Activated T-helper 2 cell treated with anti-CD3 and anti-CD28 coated beads, Interferon-gamma antibody, Interleukin-2, Interleukin-4, amounts not matched to agents 10 μg/mL and 5 μg/mL and 100 μg/mL, durations not matched to agents 14 hours and 24 hours and 36 hours (primary cell): ENCODE measurements at regions of chr3 and their contacts with region 1.

Region 1: GRCh38 chr3:100400780-100401673 is at the starts of genes LNP1 and TOMM70:
- DNase-seq: peak; percentile 92
- H3K4me3 Mint-ChIP-seq: peak within 1 kb of the TSS; percentile 90
- H3K27ac Mint-ChIP-seq: peak within 1 kb of the TSS; percentile 98
- H3K4me1 Mint-ChIP-seq: peaks cover 41% of the 10 kb centered on the region
- H3K27me3 Mint-ChIP-seq: no peaks in the 10 kb centered on the region
- total RNA-seq, gene LNP1: 2.0 and 2.8 TPM in 2 replicates
- total RNA-seq, gene TOMM70: 52.8 and 54.4 TPM in 2 replicates

Region 2: GRCh38 chr3:98556164-98557130 is 1844.6 kb before region 1 on chr3:
- intact Hi-C with region 1: loop called (anchors 10 kb)
- DNase-seq: peak; percentile 84
- H3K4me3 Mint-ChIP-seq: peak overlapping the region; percentile 77
- H3K27ac Mint-ChIP-seq: peak overlapping the region; percentile 93
- H3K4me1 Mint-ChIP-seq: peaks cover 75% of the 10 kb centered on the region
- H3K27me3 Mint-ChIP-seq: no peaks in the 10 kb centered on the region

Region 3: GRCh38 chr3:99970198-99970597 is 430.8 kb before region 1 on chr3:
- intact Hi-C with region 1: loop called (anchors 1 kb)
- DNase-seq: no peak
- H3K4me3 Mint-ChIP-seq: no peak overlapping the region
- H3K27ac Mint-ChIP-seq: peak overlapping the region; percentile 33
- H3K4me1 Mint-ChIP-seq: peaks cover 37% of the 10 kb centered on the region
- H3K27me3 Mint-ChIP-seq: no peaks in the 10 kb centered on the region

Region 4: GRCh38 chr3:100316641-100317069 is 84.4 kb before region 1 on chr3:
- intact Hi-C with region 1: loop called (anchors 5 kb)
- DNase-seq: no peak
- H3K4me3 Mint-ChIP-seq: no peak overlapping the region
- H3K27ac Mint-ChIP-seq: peak overlapping the region; percentile 51
- H3K4me1 Mint-ChIP-seq: peaks cover 12% of the 10 kb centered on the region
- H3K27me3 Mint-ChIP-seq: no peaks in the 10 kb centered on the region

Region 5: GRCh38 chr3:100340527-100340926 is 60.5 kb before region 1 on chr3:
- intact Hi-C with region 1: no loop called
- DNase-seq: no peak
- H3K4me3 Mint-ChIP-seq: no peak overlapping the region
- H3K27ac Mint-ChIP-seq: no peak overlapping the region
- H3K4me1 Mint-ChIP-seq: peaks cover 21% of the 10 kb centered on the region
- H3K27me3 Mint-ChIP-seq: no peaks in the 10 kb centered on the region

Region 6: DNA sequence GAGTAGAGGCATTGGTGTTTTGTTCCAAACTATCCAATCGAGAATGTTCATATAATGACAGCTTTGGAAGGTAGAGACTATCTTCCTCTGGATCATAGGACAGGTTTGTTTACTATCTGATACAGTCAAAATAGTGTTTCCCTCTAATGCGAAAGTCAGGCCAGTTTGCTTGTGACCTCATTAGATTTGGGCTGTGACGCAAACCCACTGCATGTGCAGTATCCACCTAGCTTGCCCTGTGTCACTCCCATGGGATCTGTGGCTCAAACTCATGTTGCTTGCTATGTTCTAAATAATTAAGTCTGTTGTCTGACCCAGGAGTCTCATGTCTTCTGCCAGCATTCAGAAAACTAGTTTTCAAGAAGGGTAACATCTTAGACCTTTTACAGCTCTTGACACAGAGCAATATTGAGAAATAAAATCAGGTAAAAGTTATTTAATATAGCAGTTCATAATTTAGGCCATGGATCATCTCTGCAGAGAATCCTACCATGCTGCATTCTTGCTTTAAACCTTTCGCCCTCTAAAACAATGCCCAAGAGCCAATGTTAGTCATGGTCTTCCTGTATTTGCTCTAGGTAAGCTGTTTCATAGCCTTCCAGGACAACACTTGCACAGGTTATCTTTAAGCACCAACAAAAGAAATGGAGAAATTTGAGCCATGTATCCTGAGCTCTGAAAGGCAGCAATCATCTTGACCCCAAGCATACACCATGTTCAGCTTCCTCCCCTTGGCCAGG is 40.1 kb before region 1 on chr3:
- intact Hi-C with region 1: no loop called
- DNase-seq: no peak
- H3K4me3 Mint-ChIP-seq: no peak overlapping the region
- H3K27ac Mint-ChIP-seq: no peak overlapping the region
- H3K4me1 Mint-ChIP-seq: no peaks in the 10 kb centered on the region
- H3K27me3 Mint-ChIP-seq: no peaks in the 10 kb centered on the region

Region 7: GRCh38 chr3:100708967-100709841 is 308.2 kb after region 1 on chr3 and contains the start of gene TFG:
- intact Hi-C with region 1: loop called (anchors 1 kb)
- DNase-seq: peak; percentile 98
- H3K4me3 Mint-ChIP-seq: peak within 1 kb of the TSS; percentile 83
- H3K27ac Mint-ChIP-seq: peak within 1 kb of the TSS; percentile 85
- H3K4me1 Mint-ChIP-seq: peaks cover 41% of the 10 kb centered on the region
- H3K27me3 Mint-ChIP-seq: no peaks in the 10 kb centered on the region
- total RNA-seq, gene TFG: 79.3 and 81.2 TPM in 2 replicates

Region 8: GRCh38 chr3:101573449-101574387 is 1172.7 kb after region 1 on chr3 and contains the start of gene PCNP:
- intact Hi-C with region 1: loop called (anchors 5 kb)
- DNase-seq: peak; percentile 99
- H3K4me3 Mint-ChIP-seq: peak within 1 kb of the TSS; percentile 96
- H3K27ac Mint-ChIP-seq: peak within 1 kb of the TSS; percentile 99
- H3K4me1 Mint-ChIP-seq: peaks cover 56% of the 10 kb centered on the region
- H3K27me3 Mint-ChIP-seq: no peaks in the 10 kb centered on the region
- total RNA-seq, gene PCNP: 190 and 192 TPM in 2 replicates